ENCODE measurements at regions of chr13 and their contacts with region 1.

Region 1: GRCh38 chr13:20566898-20567874 is at the start of gene IFT88:
- DNase-seq: peak; percentile 72 to 81
- ATAC-seq: peak; percentile 89 to 92
- H3K4me3 ChIP-seq: peak within 1 kb of the TSS; percentile 82 to 91 (median 88)
- H3K27ac ChIP-seq: peak within 1 kb of the TSS; percentile 91 to 96 (median 96)
- H3K4me1 ChIP-seq: peaks cover 9% of the 10 kb centered on the region in 2 donors
- H3K27me3 ChIP-seq: no peaks in the 10 kb centered on the region
- CTCF ChIP-seq: peak in 2 of 5 experiments; percentile 26 to 33
- POLR2A ChIP-seq: peak; percentile 51 to 59
- total RNA-seq, gene IFT88: 3.5 to 9.4 (median 4.5) TPM

Region 2: GRCh38 chr13:19959831-19960652 is 607.1 kb before region 1 on chr13:
- in situ Hi-C with region 1: no loop called
- intact Hi-C with region 1: loop called (anchors 10 kb)
- DNase-seq: peak; percentile 80 to 89
- ATAC-seq: peak; percentile 64 to 70
- H3K4me3 ChIP-seq: peak overlapping the region; percentile 74 to 97 (median 86)
- H3K27ac ChIP-seq: peak overlapping the region; percentile 96 to 98 (median 97)
- H3K4me1 ChIP-seq: peaks cover 19 to 39% of the 10 kb centered on the region in 2 donors
- H3K27me3 ChIP-seq: no peaks in the 10 kb centered on the region
- CTCF ChIP-seq: peak; percentile 78 to 99 (median 85)
- POLR2A ChIP-seq: peak; percentile 42 to 60

Region 3: DNA sequence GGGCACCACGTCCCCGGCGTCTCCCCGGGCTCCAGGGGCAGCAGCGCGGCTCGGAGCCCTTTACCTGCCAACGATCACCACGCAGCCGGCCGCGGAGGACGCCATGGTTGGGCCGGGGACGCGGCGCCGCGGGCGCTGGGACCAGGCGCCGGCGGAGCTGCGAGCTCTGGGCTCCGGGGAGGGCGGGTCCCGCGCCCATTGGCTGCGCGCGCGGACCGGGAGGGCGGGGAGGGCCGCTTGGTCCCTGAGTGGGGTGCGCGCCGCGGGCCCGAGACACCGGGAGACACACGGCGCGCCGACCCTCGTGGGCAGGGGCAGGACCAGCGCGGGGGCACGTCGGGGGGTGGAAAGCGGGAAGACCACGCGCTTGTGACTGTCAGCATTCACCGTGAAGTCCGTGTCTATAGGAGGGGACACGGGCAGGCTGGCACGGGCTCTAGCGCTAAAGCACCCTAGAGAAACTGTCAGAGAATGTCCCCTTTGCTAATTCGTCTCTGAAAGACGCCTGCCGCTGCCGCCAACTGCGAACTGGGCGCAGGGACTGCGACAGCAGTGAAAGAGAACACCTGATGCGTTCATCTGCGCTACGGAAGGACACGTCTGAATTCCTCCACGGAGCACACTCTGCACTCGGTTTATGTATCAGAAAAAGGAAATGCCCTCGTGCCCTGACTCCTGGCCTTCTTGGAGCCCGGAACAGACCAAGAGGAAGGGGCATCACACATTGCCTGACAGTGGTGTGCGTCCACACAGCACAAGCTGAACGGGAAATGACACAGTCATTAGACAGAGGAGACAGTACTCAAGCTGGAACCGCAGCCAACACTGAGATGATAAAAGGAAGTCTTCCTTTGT is 41.3 kb before region 1 on chr13 and contains the start of gene CRYL1:
- in situ Hi-C with region 1: no loop called
- intact Hi-C with region 1: loop called (anchors 1 kb)
- DNase-seq: peak; percentile 61 to 69
- ATAC-seq: peak; percentile 88 to 89
- H3K4me3 ChIP-seq: peak within 1 kb of the TSS; percentile 80 to 96 (median 88)
- H3K27ac ChIP-seq: peak within 1 kb of the TSS; percentile 86 to 91 (median 90)
- H3K4me1 ChIP-seq: peaks cover 5 to 7% of the 10 kb centered on the region in 2 donors
- H3K27me3 ChIP-seq: peaks cover 0 to 3% (median 0%) of the 10 kb centered on the region in 3 donors
- CTCF ChIP-seq: no peak
- POLR2A ChIP-seq: peak; percentile 69 to 78
- total RNA-seq, gene CRYL1: 11.0 to 17.4 (median 15.7) TPM

Region 4: GRCh38 chr13:20616059-20616797 is 49.0 kb after region 1 on chr13:
- in situ Hi-C with region 1: no loop called
- intact Hi-C with region 1: no loop called
- DNase-seq: no peak
- ATAC-seq: no peak
- H3K4me3 ChIP-seq: no peak overlapping the region
- H3K27ac ChIP-seq: no peak overlapping the region
- H3K4me1 ChIP-seq: no peaks in the 10 kb centered on the region
- H3K27me3 ChIP-seq: no peaks in the 10 kb centered on the region
- CTCF ChIP-seq: no peak
- POLR2A ChIP-seq: no peak

Region 5: GRCh38 chr13:20773194-20774080 is 206.3 kb after region 1 on chr13 and contains the start of gene EEF1AKMT1:
- in situ Hi-C with region 1: no loop called
- intact Hi-C with region 1: loop called (anchors 5 kb)
- DNase-seq: peak; percentile 82 to 93
- ATAC-seq: peak; percentile 85 to 90
- H3K4me3 ChIP-seq: peak within 1 kb of the TSS; percentile 73 to 90 (median 82)
- H3K27ac ChIP-seq: peak within 1 kb of the TSS; percentile 88 to 95 (median 94)
- H3K4me1 ChIP-seq: peaks cover 10 to 11% of the 10 kb centered on the region in 2 donors
- H3K27me3 ChIP-seq: no peaks in the 10 kb centered on the region
- CTCF ChIP-seq: peak in 1 of 5 experiments; percentile 17
- POLR2A ChIP-seq: peak; percentile 78 to 87
- total RNA-seq, gene EEF1AKMT1: 5.9 to 8.5 (median 8.0) TPM

Region 6: GRCh38 chr13:20902438-20903163 is 335.4 kb after region 1 on chr13 and contains the start of gene XPO4:
- in situ Hi-C with region 1: no loop called
- intact Hi-C with region 1: loop called (anchors 5 kb)
- DNase-seq: peak; percentile 49 to 74
- ATAC-seq: peak; percentile 93 to 96
- H3K4me3 ChIP-seq: peak within 1 kb of the TSS; percentile 80 to 97 (median 92)
- H3K27ac ChIP-seq: peak within 1 kb of the TSS; percentile 93 to 99 (median 95)
- H3K4me1 ChIP-seq: peaks cover 10 to 18% of the 10 kb centered on the region in 2 donors
- H3K27me3 ChIP-seq: no peaks in the 10 kb centered on the region
- CTCF ChIP-seq: no peak
- POLR2A ChIP-seq: peak; percentile 70 to 74
- total RNA-seq, gene XPO4: 10.0 to 18.7 (median 14.7) TPM